HAP-1 (cell line): ENCODE measurements at regions of chr13 and their contacts with region 1.

Region 1: DNA sequence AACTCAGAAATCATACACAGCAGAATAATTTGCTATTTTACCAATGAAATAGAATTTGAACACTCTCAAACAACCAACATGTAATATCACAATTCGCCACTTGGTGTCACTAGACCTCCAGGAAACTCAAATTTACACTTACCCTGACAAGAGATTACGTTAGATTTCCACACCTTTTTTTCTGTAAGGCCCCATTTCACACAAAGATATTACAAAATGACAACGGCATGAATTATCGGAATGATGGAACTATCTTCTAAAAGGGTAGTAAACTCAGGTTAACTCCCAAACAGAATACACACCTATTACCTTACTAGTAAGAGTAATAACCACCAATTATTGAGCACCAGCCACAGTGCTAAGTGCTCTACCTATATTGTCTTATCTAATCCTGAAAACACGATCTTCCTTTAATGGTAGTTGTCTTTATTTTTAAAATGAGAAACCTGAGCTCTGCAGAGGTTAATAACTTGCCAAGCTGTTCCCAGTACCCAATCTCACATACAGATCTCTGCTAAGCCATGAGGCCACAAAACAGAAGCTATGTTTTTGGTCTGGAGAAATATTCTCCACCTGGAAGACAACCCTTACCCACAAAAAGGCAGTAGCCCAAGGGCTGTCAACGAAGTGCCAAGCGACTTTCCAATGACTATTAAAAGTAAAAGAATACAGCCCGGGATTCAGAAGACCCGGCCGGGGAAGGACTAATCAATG is 152.4 kb downstream of the DCLK1 start:
- DNase-seq: peak; percentile 57 to 66
- H3K4me3 ChIP-seq: no peak overlapping the region
- H3K4me1 ChIP-seq: no peaks in the 10 kb centered on the region
- H3K27me3 ChIP-seq: no peaks in the 10 kb centered on the region

Region 2: GRCh38 chr13:35039012-35039411 is 939.7 kb before region 1 on chr13:
- in situ Hi-C with region 1: no loop called
- DNase-seq: no peak
- H3K4me3 ChIP-seq: no peak overlapping the region
- H3K4me1 ChIP-seq: no peaks in the 10 kb centered on the region
- H3K27me3 ChIP-seq: no peaks in the 10 kb centered on the region

Region 3: DNA sequence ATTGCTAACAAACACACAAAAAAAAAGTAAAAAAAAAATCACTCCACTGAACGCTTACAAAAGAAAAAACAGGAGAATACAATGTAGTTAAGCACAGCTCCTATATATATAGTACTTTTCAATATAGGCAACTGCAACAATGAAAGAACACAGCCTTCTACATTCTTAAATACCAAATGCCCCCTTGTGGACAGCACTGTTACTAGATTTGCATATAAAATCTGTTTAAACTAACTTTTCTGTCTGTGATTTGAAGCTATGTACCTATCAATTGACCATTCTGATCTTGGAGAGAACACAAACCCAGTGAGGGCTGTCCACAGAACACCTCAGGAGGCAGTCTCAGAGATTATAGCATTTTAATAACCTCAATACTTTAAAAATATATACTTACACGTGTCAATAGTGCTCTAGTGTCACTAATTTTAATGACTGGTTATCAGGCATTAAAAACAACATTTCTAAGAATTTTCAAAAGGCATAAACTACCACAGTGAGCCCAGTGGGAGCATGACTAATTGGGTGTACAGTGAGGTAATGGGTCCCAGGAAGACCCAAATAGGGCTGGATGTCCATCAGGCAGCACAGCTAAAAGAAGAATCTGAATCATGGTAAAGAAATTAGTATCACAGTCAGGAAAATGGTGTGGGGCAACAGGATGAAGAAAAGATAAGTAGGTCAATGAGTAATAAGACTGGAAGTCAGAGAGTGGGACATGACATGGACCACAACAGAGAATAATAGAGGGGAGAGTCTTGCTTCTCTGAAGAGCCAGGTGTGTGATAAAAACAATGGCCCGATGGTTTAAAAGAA is 296.6 kb after region 1 on chr13:
- in situ Hi-C with region 1: loop called (anchors 5 kb)
- DNase-seq: peak; percentile 67 to 73
- H3K4me3 ChIP-seq: no peak overlapping the region
- H3K4me1 ChIP-seq: no peaks in the 10 kb centered on the region
- H3K27me3 ChIP-seq: no peaks in the 10 kb centered on the region